Activated CD4-positive, alpha-beta memory T cell treated with anti-CD3 and anti-CD28 coated beads for 36 hours (primary cell): ENCODE measurements at regions of chr19 and their contacts with region 1.

Region 1: DNA sequence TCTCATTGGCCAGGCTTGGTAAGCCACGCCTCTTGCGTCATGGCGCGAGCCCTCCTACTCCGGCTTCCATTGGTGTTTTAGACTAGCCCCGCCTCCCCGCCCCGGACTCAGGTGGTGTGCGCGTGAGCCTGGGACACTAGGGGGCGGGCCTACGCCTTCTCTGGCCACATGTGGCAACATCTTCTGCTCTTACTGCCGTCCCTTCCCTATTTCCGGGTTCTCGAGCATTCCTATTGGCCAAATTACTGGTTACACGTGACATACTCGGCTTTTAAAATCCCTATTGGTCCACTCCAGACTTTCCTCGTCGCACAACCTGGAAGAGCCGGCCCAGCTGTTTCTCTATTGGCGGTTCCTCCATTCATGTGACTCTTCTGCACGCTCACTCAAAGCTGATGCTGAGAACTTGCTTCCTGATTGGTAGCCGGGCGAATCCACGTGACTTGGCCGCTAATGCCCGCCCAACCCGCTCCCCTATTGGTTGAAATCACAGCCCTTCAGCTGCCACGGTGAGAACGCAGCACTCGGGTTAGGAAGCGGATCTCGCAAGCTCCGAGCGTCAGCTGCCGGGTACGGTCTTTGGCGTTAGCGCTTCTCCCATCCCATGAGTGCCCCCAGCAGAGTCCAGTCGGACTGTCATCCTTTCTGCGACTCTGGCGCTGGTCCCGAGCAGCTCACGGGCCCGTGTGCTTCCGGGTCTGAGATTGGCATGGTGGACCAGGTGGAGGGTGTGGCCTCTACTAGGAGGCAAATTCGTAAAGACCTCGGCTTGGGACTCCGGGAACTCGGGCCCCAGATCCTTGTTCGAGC is at the start of gene BLOC1S3:
- DNase-seq: peak; percentile 100
- H3K4me3 Mint-ChIP-seq: peak within 1 kb of the TSS; percentile 94
- H3K27ac Mint-ChIP-seq: peak within 1 kb of the TSS; percentile 92
- H3K4me1 Mint-ChIP-seq: peaks cover 40% of the 10 kb centered on the region
- H3K27me3 Mint-ChIP-seq: no peaks in the 10 kb centered on the region
- total RNA-seq, gene BLOC1S3: 10.4 to 11.8 TPM

Region 2: GRCh38 chr19:44500148-44500956 is 678.1 kb before region 1 on chr19 and contains the start of gene ZNF180:
- CTCF ChIA-PET with region 1: no interaction called
- POLR2A ChIA-PET with region 1: no interaction called
- intact Hi-C with region 1: no loop called
- DNase-seq: peak; percentile 96
- H3K4me3 Mint-ChIP-seq: peak within 1 kb of the TSS; percentile 87
- H3K27ac Mint-ChIP-seq: peak within 1 kb of the TSS; percentile 90
- H3K4me1 Mint-ChIP-seq: peaks cover 23% of the 10 kb centered on the region
- H3K27me3 Mint-ChIP-seq: peaks cover 6% of the 10 kb centered on the region
- total RNA-seq, gene ZNF180: 4.3 to 5.4 TPM

Region 3: DNA sequence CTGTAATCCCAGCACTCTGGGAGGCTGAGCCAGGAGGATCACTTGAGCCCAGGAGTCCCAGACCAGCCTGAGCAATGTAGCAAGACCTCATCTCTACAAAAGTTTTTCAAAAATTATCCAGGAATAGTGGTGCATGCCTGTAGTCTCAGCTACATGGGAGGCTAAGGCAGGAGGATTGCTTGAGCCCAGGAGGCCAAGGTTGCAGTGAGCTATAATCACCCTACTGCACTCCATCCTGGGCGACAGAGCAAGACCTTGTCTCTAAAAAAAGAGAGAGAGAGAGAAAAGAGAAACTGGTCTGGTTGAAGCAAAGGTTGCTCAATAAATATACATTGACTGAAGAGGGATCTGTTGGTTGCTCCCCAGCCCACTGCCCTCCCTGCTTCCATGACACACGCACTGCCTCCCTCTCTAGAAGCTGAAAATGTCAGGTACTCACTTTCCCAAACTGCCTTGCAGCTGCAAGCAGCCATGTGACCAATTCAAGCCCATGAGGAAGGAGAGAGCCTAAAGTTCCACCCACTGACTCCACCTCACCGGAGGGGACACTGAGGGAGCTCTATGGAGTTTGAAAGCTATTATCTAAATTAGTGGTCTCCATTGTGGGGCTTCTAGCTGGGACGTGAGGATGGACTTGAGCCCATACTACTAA is 465.5 kb before region 1 on chr19:
- CTCF ChIA-PET with region 1: no interaction called
- POLR2A ChIA-PET with region 1: no interaction called
- intact Hi-C with region 1: no loop called
- DNase-seq: no peak
- H3K4me3 Mint-ChIP-seq: no peak overlapping the region
- H3K27ac Mint-ChIP-seq: no peak overlapping the region
- H3K4me1 Mint-ChIP-seq: no peaks in the 10 kb centered on the region
- H3K27me3 Mint-ChIP-seq: no peaks in the 10 kb centered on the region

Region 4: DNA sequence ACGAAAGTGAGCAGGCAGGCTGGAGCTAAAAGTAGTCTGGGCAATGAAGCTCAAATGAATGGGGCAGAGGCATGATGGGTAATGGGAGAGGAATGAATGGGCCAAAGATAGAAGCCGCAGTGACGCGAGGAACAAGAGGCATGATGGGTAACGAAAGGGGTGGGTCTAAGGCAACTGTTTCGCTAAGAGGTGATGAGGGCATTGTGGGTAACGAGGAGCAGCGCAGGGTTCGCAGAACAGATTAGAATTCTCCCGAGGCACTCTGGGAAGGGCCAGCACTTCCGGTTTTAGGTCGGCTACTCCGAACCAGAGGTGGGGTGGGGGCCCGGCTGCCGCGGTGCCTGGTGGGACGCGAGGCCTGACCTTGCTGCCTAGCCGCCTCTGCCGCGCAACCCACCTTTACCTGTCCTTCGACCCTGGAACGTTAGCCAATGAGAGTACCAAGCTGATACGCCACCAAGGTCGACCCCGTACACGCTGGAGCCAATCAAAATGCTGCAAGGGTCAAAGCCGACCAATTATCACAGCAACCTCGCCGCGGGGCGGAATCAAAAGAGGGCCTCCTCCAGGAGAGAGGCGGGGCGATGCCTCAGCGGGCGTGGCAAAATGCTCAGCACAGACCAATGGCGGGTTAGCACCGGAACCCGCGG is 288.0 kb before region 1 on chr19:
- CTCF ChIA-PET with region 1: interaction called, 3 read pairs
- POLR2A ChIA-PET with region 1: no interaction called
- intact Hi-C with region 1: loop called (anchors 1 kb)
- DNase-seq: peak; percentile 100
- H3K4me3 Mint-ChIP-seq: peak overlapping the region; percentile 85
- H3K27ac Mint-ChIP-seq: peak overlapping the region; percentile 97
- H3K4me1 Mint-ChIP-seq: peaks cover 27% of the 10 kb centered on the region
- H3K27me3 Mint-ChIP-seq: no peaks in the 10 kb centered on the region

Region 5: GRCh38 chr19:45016388-45017319 is 161.8 kb before region 1 on chr19:
- CTCF ChIA-PET with region 1: no interaction called
- POLR2A ChIA-PET with region 1: no interaction called
- intact Hi-C with region 1: loop called (anchors 5 kb)
- DNase-seq: peak; percentile 91
- H3K4me3 Mint-ChIP-seq: peak overlapping the region; percentile 34
- H3K27ac Mint-ChIP-seq: peak overlapping the region; percentile 90
- H3K4me1 Mint-ChIP-seq: peaks cover 17% of the 10 kb centered on the region
- H3K27me3 Mint-ChIP-seq: no peaks in the 10 kb centered on the region

Region 6: DNA sequence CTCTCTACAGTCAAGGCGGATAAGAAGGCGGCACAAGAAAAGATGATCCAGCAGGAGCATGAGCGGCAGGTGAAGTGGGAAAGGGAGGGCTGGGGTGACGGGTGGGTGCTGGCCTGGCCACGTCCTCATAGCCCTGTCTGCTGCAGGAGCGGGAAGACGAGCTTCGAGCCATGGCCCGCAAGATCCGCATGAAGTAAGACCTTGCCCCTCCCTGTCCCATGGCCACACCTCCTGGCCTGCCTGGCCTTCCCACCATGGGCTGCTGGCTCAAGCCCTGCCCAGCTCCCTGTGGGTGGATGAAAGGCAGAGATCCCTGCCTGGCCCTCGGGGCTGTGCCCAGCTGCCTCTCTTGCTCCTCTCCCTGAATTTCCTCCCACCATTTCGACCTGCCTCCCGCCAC is 109.4 kb before region 1 on chr19:
- CTCF ChIA-PET with region 1: no interaction called
- POLR2A ChIA-PET with region 1: no interaction called
- intact Hi-C with region 1: no loop called
- DNase-seq: no peak
- H3K4me3 Mint-ChIP-seq: no peak overlapping the region
- H3K27ac Mint-ChIP-seq: no peak overlapping the region
- H3K4me1 Mint-ChIP-seq: no peaks in the 10 kb centered on the region
- H3K27me3 Mint-ChIP-seq: no peaks in the 10 kb centered on the region

Region 7: GRCh38 chr19:45092747-45093678 is 85.5 kb before region 1 on chr19 and contains the start of gene PPP1R37:
- CTCF ChIA-PET with region 1: interaction called, 4 read pairs
- POLR2A ChIA-PET with region 1: interaction called, 14 read pairs
- intact Hi-C with region 1: loop called (anchors 1 kb)
- DNase-seq: peak; percentile 95
- H3K4me3 Mint-ChIP-seq: peak within 1 kb of the TSS; percentile 86
- H3K27ac Mint-ChIP-seq: peak within 1 kb of the TSS; percentile 97
- H3K4me1 Mint-ChIP-seq: peaks cover 46% of the 10 kb centered on the region
- H3K27me3 Mint-ChIP-seq: no peaks in the 10 kb centered on the region
- total RNA-seq, gene PPP1R37: 12.7 to 13.1 TPM

Region 8: DNA sequence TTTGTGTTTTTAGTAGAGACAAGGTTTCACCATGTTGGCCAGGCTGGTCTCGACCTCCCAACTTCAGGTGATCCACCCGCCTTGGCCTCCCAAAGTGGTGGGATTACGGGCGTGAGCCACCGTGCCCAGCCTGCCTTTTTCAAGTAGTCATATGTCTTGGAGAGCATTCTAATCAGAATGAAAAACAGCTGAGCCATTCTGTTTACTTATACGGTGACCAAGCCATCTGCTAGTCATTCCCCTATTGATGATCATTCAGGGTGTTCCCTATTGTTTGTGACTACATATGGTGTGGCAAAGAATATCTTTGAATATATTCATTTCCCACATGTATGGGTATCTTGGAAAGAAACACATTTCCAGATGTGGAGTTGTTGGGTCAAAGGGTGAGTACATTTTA is 17.3 kb after region 1 on chr19:
- CTCF ChIA-PET with region 1: no interaction called
- POLR2A ChIA-PET with region 1: no interaction called
- intact Hi-C with region 1: no loop called
- DNase-seq: no peak
- H3K4me3 Mint-ChIP-seq: no peak overlapping the region
- H3K27ac Mint-ChIP-seq: no peak overlapping the region
- H3K4me1 Mint-ChIP-seq: no peaks in the 10 kb centered on the region
- H3K27me3 Mint-ChIP-seq: no peaks in the 10 kb centered on the region

Region 9: GRCh38 chr19:45370410-45371204 is 192.1 kb after region 1 on chr19 and contains the start of gene ERCC2:
- CTCF ChIA-PET with region 1: no interaction called
- POLR2A ChIA-PET with region 1: no interaction called
- intact Hi-C with region 1: loop called (anchors 1 kb)
- DNase-seq: peak; percentile 100
- H3K4me3 Mint-ChIP-seq: peak within 1 kb of the TSS; percentile 85
- H3K27ac Mint-ChIP-seq: peak within 1 kb of the TSS; percentile 96
- H3K4me1 Mint-ChIP-seq: peaks cover 8% of the 10 kb centered on the region
- H3K27me3 Mint-ChIP-seq: peaks cover 2% of the 10 kb centered on the region
- total RNA-seq, gene ERCC2: 27.2 to 27.4 TPM